ENCODE measurements at regions of chr12 and their contacts with region 1.

Region 1: GRCh38 chr12:71702590-71702989 is 16.7 kb downstream of the TMEM19 start:
- DNase-seq: no peak
- ATAC-seq: no peak
- H3K4me3 Mint-ChIP-seq: no peak overlapping the region
- H3K27ac Mint-ChIP-seq: no peak overlapping the region
- H3K4me1 Mint-ChIP-seq: peaks cover 27% of the 10 kb centered on the region
- H3K27me3 Mint-ChIP-seq: no peaks in the 10 kb centered on the region
- CTCF ChIP-seq: no peak

Region 2: GRCh38 chr12:71439362-71440314 is 263.0 kb before region 1 on chr12 and contains the start of gene LGR5:
- CTCF ChIA-PET with region 1: no interaction called
- POLR2A ChIA-PET with region 1: no interaction called
- intact Hi-C with region 1: no loop called
- DNase-seq: no peak
- ATAC-seq: peak; percentile 42
- H3K4me3 Mint-ChIP-seq: peak within 1 kb of the TSS; percentile 86
- H3K27ac Mint-ChIP-seq: no peak within 1 kb of the TSS
- H3K4me1 Mint-ChIP-seq: peaks cover 21% of the 10 kb centered on the region
- H3K27me3 Mint-ChIP-seq: peaks cover 39% of the 10 kb centered on the region
- CTCF ChIP-seq: no peak
- total RNA-seq, gene LGR5: not detected in 2 replicates

Region 3: GRCh38 chr12:71719615-71720370 is 17.2 kb after region 1 on chr12:
- CTCF ChIA-PET with region 1: no interaction called
- POLR2A ChIA-PET with region 1: interaction called, 4 read pairs
- intact Hi-C with region 1: loop called (anchors 2 kb)
- DNase-seq: no peak
- ATAC-seq: no peak
- H3K4me3 Mint-ChIP-seq: no peak overlapping the region
- H3K27ac Mint-ChIP-seq: no peak overlapping the region
- H3K4me1 Mint-ChIP-seq: no peaks in the 10 kb centered on the region
- H3K27me3 Mint-ChIP-seq: no peaks in the 10 kb centered on the region
- CTCF ChIP-seq: no peak

Region 4: DNA sequence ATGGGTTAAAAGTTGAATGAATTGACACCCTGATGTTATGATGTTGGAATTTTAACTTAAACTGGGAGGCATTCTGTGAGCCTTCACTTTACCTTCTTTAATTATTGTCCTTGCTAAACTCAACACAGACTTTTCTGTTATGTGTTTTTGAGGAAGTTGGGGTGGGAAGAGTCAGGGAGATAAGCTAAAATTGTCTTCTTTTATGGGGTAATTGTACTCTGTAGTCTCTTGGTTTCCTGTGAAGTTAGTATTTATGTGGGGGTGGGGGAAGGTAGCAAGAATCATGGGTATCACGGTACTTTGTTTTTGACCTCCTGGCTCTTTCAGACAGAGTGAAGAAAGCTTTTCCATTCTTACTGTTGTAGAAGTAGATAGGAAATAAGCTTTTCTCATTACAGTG is 85.0 kb after region 1 on chr12:
- CTCF ChIA-PET with region 1: no interaction called
- POLR2A ChIA-PET with region 1: no interaction called
- intact Hi-C with region 1: no loop called
- DNase-seq: no peak
- ATAC-seq: no peak
- H3K4me3 Mint-ChIP-seq: no peak overlapping the region
- H3K27ac Mint-ChIP-seq: no peak overlapping the region
- H3K4me1 Mint-ChIP-seq: no peaks in the 10 kb centered on the region
- H3K27me3 Mint-ChIP-seq: no peaks in the 10 kb centered on the region
- CTCF ChIP-seq: no peak

Measured in activated B cell treated with CpG ODN at 0.5 μM for 24 hours (primary cell).